MCF 10A (cell line): ENCODE measurements at regions of chr1 and their contacts with region 1.

Region 1: GRCh38 chr1:52669696-52670095 is 28.5 kb downstream of the COA7 start:
- DNase-seq: no peak
- H3K4me3 Mint-ChIP-seq: no peak overlapping the region
- H3K27ac Mint-ChIP-seq: peak overlapping the region; percentile 94
- H3K4me1 Mint-ChIP-seq: peaks cover 46% of the 10 kb centered on the region
- H3K27me3 Mint-ChIP-seq: no peaks in the 10 kb centered on the region
- CTCF ChIP-seq: no peak

Region 2: DNA sequence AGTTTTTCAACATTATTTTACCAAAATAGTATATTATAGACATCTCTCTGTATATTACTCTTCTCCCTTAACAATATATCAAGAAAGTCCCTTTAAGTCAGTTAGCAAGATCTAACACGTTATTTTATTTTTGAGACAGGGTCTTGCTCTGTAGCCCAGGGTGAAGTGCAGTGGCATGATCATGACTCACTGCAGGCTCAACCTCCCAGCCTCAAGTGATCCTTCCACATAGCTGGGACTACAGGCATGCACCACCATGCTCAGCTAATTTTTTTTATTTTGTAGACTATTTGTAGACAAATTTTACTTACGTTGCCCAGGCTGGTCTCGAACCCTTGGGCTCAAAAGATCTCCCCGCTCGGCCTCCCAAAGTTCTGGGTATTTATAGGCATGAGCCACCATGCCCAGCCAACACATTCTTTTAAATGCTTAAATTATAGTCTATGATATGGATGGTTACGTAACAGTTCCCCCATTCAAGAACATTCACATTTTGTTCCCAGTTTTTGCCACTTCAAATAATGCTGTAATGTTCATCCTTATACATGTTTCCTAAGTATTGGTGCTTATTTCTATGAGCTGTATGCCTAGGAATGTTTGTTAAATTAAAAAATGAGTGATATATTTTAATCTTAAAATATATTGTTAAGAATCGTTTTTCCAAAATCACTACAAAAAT is 187.2 kb before region 1 on chr1:
- CTCF ChIA-PET with region 1: no interaction called
- POLR2A ChIA-PET with region 1: interaction called, 10 read pairs
- intact Hi-C with region 1: no loop called
- DNase-seq: no peak
- H3K4me3 Mint-ChIP-seq: no peak overlapping the region
- H3K27ac Mint-ChIP-seq: no peak overlapping the region
- H3K4me1 Mint-ChIP-seq: peaks cover 5% of the 10 kb centered on the region
- H3K27me3 Mint-ChIP-seq: no peaks in the 10 kb centered on the region
- CTCF ChIP-seq: no peak

Region 3: GRCh38 chr1:52947490-52947889 is 277.8 kb after region 1 on chr1:
- CTCF ChIA-PET with region 1: no interaction called
- POLR2A ChIA-PET with region 1: no interaction called
- intact Hi-C with region 1: no loop called
- DNase-seq: no peak
- H3K4me3 Mint-ChIP-seq: no peak overlapping the region
- H3K27ac Mint-ChIP-seq: no peak overlapping the region
- H3K4me1 Mint-ChIP-seq: no peaks in the 10 kb centered on the region
- H3K27me3 Mint-ChIP-seq: no peaks in the 10 kb centered on the region
- CTCF ChIP-seq: no peak